GM10248 (cell line): ENCODE measurements at regions of chr15 and their contacts with region 1.

Region 1: DNA sequence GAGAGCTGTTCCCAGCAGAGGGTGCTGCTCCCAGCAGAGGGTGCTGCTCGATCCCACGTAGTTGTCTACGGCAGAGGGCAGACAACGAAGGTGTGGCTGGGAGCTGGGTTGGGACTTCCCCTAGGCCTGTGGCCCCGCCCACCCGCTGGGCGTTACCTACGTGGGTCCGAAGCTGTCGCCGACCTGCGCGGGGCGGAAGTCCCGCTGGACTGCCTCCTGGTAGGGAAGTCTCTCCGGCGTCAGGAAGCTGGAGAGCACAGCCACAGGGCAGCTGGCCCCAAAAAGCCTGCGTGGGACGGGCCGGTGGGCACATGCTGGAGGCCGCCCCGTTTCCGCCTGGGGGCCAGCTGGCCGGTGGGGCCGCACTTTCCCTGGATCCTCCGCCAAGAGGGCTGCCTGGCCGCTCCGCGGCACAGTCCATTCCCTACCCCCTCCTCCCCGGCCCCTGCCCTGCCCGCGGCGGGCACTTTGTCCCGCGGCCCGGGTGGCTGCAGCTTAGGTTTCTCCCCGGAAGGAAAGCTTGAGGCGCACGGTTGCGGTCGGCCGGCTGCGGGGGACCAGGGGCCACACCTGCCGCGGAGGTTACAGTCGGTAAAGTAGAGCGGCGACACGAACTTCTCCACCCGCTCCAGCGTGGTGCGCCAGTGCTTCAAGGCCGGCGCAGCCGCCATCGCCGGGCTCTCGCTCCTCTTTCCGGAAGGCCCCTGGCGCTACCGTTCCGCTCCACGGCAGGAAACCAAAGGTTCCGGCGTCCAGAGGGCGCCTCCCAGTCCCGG is at the start of gene MAN2C1:
- DNase-seq: peak; percentile 97
- CTCF ChIP-seq: peak; percentile 75

Region 2: DNA sequence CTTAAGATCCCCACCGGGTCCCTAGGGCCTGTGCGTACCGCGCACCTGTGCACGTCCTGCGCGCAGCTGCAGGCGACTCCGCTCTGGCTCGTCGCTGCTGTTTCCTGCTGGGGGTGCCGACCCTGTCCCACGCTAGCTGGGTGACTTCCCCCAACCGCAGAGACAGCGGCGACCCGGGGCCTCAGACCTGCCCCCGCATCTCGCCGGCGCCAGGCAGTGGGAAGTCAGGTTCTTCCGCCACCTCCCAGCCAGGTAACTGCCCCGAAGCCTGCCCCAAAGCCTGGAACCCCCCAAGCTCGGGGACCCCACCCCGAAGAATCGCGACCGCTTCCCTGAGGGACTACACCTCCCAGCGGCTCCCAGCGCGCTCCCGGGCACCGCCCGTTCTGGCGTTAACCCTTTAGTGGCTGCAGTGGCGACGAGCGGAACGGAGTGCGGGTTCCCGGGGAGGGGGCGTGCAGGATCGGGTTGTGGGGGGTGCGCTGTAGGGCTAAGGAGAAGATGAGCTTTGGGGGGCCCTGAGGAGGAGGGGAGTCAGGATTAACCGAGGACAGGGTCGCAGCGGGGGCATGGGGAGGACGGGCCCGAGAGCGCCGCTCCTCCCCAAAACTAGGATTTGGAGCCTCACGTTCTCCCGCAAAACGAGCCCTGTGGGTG is 20.8 kb before region 1 on chr15:
- CTCF ChIA-PET with region 1: interaction called, 23 read pairs
- POLR2A ChIA-PET with region 1: interaction called, 3 read pairs
- DNase-seq: peak; percentile 77
- CTCF ChIP-seq: no peak

Region 3: GRCh38 chr15:75380773-75381172 is 12.7 kb after region 1 on chr15:
- CTCF ChIA-PET with region 1: interaction called, 39 read pairs
- POLR2A ChIA-PET with region 1: interaction called, 4 read pairs
- DNase-seq: no peak
- CTCF ChIP-seq: no peak

Region 4: GRCh38 chr15:75416584-75416983 is 48.5 kb after region 1 on chr15:
- CTCF ChIA-PET with region 1: no interaction called
- POLR2A ChIA-PET with region 1: no interaction called
- DNase-seq: no peak
- CTCF ChIP-seq: no peak

Region 5: DNA sequence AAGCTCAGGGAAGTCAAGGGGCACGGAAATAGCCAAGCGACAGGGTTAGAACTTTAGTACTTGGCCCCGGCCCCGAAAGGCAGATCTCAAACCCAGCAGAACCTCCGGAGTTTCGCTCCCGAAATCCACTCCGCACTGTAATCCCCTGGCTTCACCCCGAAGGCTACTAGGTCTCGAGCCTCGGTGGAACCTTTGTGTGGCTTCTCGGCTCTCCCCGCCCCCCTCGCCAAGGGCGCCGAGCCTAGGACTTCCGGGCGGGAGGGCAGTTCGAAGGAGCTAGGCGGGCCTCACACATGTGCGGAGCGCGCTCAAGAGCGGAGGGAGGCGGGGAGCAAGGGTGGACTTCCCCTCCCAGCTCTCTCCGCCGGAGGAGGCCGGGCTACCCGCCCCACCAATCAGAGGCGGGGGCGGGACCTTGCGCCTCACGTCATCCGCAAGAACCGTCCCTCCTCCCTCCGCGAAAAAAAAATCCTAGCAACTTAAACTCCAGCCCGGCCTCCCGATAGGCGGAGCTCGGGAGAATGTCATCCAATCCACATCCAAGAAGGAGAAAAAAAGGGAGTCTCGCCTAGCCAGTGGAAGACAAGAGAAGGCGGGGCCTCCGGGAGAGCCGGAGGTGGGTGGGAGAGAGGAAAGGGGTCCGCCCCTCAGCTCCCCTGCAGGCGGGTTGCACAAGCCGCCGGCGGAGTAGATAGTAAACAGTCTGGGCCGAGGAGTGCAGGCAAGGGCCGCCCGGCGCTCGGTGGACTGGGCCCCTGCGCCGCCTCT is 85.8 kb after region 1 on chr15:
- CTCF ChIA-PET with region 1: interaction called, 47 read pairs
- POLR2A ChIA-PET with region 1: interaction called, 23 read pairs
- DNase-seq: peak; percentile 93
- CTCF ChIP-seq: no peak

Region 6: GRCh38 chr15:75647370-75648155 is 279.5 kb after region 1 on chr15 and contains the start of gene SNX33:
- CTCF ChIA-PET with region 1: interaction called, 16 read pairs
- POLR2A ChIA-PET with region 1: interaction called, 4 read pairs
- DNase-seq: peak; percentile 79
- CTCF ChIP-seq: peak; percentile 45